Right cardiac atrium (tissue), 5 donors: ENCODE measurements at regions of chr7 and their contacts with region 1.

Region 1: DNA sequence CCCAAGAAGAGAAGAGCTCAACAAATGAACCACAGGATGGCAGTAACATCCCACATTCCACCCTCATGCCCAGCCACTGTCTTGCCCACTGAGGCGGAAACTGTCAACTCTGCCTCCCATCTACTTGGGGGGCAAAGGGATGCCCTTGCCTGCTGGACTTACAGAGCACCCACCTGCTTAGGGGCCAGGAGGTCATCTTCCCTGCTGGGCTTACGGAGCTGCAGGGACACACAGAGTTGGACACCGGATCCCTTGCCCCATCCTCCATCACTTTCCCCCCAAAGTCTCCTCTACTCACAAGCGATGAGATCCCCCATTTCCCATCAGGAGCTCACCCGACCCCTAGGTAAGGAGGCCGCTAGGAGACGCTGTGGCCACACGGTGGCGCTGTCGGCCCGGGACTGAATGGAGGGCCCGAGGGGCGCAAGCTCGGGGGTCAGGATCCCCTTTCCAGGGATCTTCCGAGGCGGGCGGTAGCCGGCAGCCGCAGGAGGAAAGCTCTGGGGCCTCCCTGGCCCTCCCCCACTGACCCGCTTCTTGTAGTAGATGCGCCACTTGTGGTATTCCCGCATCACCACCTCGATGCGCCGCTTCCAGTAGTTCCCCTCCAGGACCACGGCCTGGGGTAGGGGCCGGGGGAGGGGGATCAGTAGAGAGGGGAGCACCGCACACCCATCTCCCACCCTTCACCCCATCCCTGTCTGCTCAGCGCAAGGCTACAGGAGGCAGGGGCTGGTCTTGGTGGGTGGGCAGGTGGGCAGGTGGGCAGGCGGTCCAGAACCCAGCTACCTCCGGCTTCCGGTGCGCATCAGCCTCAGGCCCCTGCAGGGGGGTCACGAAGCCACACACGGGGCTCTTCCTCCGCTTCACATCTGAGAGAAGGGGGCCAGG is 17.3 kb downstream of the MLXIPL start:
- DNase-seq: peak; percentile 49 to 80 (median 80)
- ATAC-seq: peak; percentile 59 to 74
- H3K4me3 ChIP-seq: no peak overlapping the region
- H3K27ac ChIP-seq: no peak overlapping the region
- H3K4me1 ChIP-seq: no peaks in the 10 kb centered on the region
- H3K27me3 ChIP-seq: no peaks in the 10 kb centered on the region

Region 2: DNA sequence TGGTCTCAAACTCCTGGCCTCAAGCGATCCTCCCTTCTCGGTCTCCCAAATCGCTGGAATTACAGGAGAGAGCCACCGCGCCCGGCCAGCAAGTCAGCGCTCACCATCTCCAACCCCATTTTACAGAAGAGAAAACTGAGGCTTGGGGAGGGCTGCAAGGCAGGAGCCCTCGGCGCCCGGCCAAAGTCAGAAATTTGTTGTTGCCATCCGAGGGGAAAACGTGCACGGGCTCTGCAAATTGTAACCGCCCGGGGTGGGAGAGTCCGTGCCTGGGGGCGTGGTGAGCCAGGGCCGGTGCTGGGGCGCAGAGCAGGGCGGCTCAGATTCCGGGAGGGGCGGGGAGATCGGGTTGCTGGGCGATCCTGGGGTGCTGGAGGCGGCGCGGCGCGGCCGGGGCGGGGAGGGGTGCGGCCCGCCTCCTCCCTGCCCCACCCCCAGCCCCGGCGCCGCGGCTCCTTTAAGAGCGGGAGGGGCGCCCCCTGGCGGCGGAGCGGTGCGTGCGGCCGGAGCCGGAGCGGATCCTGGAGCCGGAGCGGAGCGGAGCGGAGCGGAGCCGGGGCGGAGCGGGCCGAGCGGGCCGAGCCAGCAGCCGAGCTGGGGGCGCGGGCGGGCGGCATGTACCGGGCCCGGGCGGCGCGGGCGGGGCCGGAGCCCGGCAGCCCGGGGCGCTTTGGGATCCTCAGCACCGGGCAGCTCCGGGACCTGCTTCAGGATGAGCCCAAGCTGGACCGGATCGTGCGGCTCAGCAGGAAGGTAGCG is 60.5 kb after region 1 on chr7 and contains the start of gene VPS37D:
- intact Hi-C with region 1: loop called in 2 of 4 experiments (anchors 10 kb)
- DNase-seq: peak; percentile 91 to 97 (median 97)
- ATAC-seq: peak; percentile 96
- H3K4me3 ChIP-seq: peak within 1 kb of the TSS; percentile 96
- H3K27ac ChIP-seq: no peak within 1 kb of the TSS
- H3K4me1 ChIP-seq: no peaks in the 10 kb centered on the region
- H3K27me3 ChIP-seq: no peaks in the 10 kb centered on the region
- total RNA-seq, gene VPS37D: 1.6 to 2.5 (median 2.1) TPM

Region 3: DNA sequence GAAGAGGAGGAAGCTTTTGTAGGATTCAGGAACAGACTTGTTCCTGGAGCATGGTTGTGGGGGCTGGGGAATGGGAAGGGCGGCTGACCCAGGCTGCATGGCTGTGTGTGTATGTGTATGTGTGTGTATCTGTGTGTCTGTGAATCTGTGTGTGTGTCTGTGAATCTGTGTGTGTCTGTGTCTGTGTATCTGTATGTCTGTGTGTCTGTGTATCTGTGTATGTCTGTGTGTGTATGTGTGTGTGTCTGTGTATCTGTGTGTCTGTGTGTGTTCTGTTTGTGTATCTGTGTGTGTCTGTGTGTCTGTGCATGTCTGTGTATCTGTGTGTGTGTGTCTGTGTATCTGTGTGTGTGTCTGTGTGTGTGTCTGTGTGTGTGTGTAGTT is 119.0 kb after region 1 on chr7:
- intact Hi-C with region 1: loop called (anchors 2 to 5 kb)
- DNase-seq: no peak
- ATAC-seq: peak in 1 of 2 donors; percentile 7
- H3K4me3 ChIP-seq: no peak overlapping the region
- H3K27ac ChIP-seq: no peak overlapping the region
- H3K4me1 ChIP-seq: no peaks in the 10 kb centered on the region
- H3K27me3 ChIP-seq: no peaks in the 10 kb centered on the region

Region 4: DNA sequence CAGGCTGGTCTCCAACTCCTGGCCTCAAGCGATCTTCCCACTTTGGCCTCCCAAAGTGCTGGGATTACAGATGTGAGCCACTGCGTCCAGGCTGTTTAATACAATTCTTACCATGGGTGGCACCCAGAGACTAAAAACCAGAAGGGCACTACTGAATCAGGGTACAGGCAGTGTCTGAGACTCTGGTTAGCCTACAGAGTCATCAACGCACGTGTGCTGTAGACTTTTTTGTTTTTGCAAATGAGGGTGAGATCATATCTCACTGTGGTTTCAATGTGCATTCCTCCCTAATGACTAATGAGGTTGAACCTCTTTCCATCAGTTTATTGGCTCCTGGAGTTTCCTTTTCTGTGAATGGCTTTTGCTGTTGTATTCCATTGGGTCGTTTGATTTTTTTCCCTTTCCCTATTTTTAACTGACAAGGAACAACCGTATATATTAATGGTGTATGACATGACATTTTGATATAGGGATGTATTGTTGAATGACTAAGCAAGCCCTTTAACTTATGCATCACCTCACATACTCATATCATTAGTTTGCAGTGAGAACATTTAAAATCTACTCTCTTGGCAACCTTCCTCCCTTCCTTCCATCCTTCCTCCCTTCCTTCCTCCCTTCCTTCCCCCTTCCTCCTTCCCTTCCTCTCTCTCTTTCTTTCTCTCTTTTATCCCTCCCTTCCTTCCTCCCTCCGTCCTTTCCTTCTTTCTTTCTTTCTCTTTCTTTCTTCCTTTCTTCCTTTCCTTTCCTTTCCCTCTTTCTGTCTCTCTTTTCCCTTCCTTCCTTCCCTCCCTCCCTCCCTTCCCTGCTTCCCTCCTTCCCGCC is 244.6 kb after region 1 on chr7:
- intact Hi-C with region 1: loop called in 1 of 4 experiments (anchors 5 kb)
- DNase-seq: no peak
- ATAC-seq: peak; percentile 64 to 75
- H3K4me3 ChIP-seq: no peak overlapping the region
- H3K27ac ChIP-seq: no peak overlapping the region
- H3K4me1 ChIP-seq: no peaks in the 10 kb centered on the region
- H3K27me3 ChIP-seq: no peaks in the 10 kb centered on the region